Left ventricle myocardium inferior (tissue), 1 donor: ENCODE measurements at regions of chr11 and their contacts with region 1.

Region 1: GRCh38 chr11:122781378-122782195 is 56.7 kb upstream of the CRTAM start:
- DNase-seq: peak; percentile 86
- H3K4me3 ChIP-seq: no peak overlapping the region
- H3K27ac ChIP-seq: peak overlapping the region; percentile 37
- H3K4me1 ChIP-seq: peaks cover 37% of the 10 kb centered on the region
- H3K27me3 ChIP-seq: peaks cover 26% of the 10 kb centered on the region
- CTCF ChIP-seq: peak; percentile 97

Region 2: DNA sequence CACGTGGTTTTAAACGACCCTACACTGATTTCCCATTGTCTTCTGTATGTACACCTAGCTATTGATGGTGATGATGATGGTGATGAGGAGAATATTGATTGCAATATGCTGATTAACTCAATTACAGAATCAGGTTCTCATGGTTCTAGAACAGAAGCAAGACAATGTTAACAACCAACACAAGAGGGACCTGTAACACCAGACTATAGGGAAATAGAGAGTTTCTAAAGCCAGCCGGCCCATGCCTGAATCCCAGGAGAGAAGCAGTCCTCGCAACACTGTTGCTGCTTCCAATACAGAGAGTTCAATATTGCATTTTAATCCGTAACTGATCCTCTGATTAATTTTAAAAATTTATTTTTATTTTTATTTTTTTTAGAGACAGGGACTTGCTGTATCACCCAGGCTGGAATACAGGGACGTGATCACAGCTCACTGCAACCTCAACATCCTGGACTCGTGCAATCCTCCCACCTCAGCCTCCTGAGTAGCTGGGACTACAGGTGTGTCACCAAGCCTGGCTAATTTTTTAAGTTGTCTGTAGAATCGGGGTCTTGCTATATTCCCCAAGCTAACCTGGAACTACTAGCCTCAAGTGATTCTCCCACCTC is 148.3 kb before region 1 on chr11:
- intact Hi-C with region 1: loop called (anchors 2 kb)
- DNase-seq: peak; percentile 16
- H3K4me3 ChIP-seq: no peak overlapping the region
- H3K27ac ChIP-seq: no peak overlapping the region
- H3K4me1 ChIP-seq: peaks cover 3% of the 10 kb centered on the region
- H3K27me3 ChIP-seq: peaks cover 34% of the 10 kb centered on the region
- CTCF ChIP-seq: peak; percentile 65